PC-9 (cell line): ENCODE measurements at regions of chr2 and their contacts with region 1.

Region 1: GRCh38 chr2:177489719-177490301 is 97.2 kb downstream of the AGPS start:
- DNase-seq: no peak
- H3K4me3 ChIP-seq: no peak overlapping the region
- H3K27ac ChIP-seq: no peak overlapping the region
- H3K4me1 ChIP-seq: no peaks in the 10 kb centered on the region
- H3K27me3 ChIP-seq: no peaks in the 10 kb centered on the region
- CTCF ChIP-seq: peak; percentile 88

Region 2: DNA sequence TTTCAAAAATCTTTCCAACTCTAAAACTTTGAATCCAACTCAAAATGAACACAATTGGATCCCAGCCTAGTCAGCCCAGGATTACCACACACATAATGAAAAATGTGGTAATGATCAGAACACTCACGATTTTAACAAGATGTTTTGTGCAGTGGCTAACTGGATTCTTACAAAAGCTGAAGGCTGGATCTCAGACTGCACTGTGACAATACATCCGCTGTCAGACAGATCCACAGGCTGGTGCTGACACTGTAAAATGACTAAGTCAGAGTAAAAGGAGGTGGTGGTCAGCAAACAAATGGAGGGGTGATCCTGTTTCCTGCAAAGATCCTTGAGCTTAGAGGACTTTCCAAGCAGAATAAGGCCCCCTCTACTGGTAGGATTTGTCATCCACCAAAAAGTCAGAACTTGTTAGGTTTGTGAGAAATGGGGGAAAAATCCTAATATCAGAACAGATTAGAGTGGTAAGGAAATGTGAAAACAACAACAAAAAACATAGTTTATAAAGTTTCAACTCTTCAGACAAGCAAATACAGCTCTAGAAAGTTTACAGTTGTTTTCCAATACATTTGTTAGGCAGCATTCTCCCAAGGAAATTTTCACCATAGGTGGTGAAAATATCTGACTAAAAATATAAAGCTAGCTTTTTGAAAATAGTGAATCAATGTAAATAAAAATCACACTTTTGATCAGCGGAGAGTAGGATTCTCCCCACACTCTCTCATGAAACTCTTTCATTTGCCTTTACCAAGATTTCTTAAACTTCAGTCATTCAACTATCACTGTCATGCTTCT is 114.7 kb after region 1 on chr2:
- CTCF ChIA-PET with region 1: interaction called, 4 read pairs
- POLR2A ChIA-PET with region 1: no interaction called
- intact Hi-C with region 1: loop called (anchors 10 kb)
- DNase-seq: peak in 1 of 2 experiments; percentile 16
- H3K4me3 ChIP-seq: no peak overlapping the region
- H3K27ac ChIP-seq: no peak overlapping the region
- H3K4me1 ChIP-seq: no peaks in the 10 kb centered on the region
- H3K27me3 ChIP-seq: no peaks in the 10 kb centered on the region
- CTCF ChIP-seq: peak; percentile 84

Region 3: GRCh38 chr2:177724398-177725287 is 234.8 kb after region 1 on chr2:
- CTCF ChIA-PET with region 1: no interaction called
- POLR2A ChIA-PET with region 1: no interaction called
- intact Hi-C with region 1: loop called (anchors 1 kb)
- DNase-seq: peak in 1 of 2 experiments; percentile 61
- H3K4me3 ChIP-seq: no peak overlapping the region
- H3K27ac ChIP-seq: no peak overlapping the region
- H3K4me1 ChIP-seq: no peaks in the 10 kb centered on the region
- H3K27me3 ChIP-seq: no peaks in the 10 kb centered on the region
- CTCF ChIP-seq: peak; percentile 99

Region 4: DNA sequence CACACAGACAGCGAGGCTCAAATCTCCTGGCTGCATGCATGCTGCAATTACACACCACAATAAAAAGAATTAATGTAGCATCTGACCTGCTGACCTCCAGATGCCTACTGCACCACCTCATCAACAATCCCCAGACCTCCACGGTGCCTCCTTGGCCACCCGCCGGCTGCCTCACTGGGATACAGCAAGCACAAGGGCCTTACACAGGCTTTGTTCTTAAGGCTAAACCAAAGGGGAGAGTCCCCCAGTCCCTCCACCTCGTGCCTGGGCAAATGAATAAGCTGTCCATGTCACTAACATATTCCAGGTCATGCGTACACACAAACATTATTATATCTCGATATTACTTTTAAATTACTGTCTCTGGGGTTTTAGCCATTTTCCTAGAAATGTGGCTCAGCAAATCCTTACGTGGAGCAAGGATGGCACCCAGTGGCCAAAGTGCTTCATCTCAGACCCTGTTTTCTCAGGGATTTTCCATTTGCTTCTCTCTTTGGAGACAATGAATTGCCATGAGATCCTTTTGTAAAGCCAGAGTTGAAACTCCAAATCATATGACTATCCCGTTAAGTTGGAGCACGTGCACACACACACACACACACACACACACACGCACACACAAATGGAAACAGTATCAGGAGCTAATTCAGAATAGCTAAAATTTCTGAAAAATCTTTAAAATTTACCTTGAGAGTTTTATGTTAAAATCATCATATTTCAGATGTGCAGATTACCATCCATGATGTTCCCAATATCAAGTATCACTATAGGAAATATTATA is 269.0 kb after region 1 on chr2:
- CTCF ChIA-PET with region 1: interaction called, 18 read pairs
- POLR2A ChIA-PET with region 1: no interaction called
- intact Hi-C with region 1: no loop called
- DNase-seq: peak in 1 of 2 experiments; percentile 53
- H3K4me3 ChIP-seq: no peak overlapping the region
- H3K27ac ChIP-seq: no peak overlapping the region
- H3K4me1 ChIP-seq: no peaks in the 10 kb centered on the region
- H3K27me3 ChIP-seq: no peaks in the 10 kb centered on the region
- CTCF ChIP-seq: peak; percentile 76

Region 5: GRCh38 chr2:178072383-178073301 is 582.8 kb after region 1 on chr2 and contains the start of gene PDE11A:
- CTCF ChIA-PET with region 1: no interaction called
- POLR2A ChIA-PET with region 1: interaction called, 10 read pairs
- intact Hi-C with region 1: no loop called
- DNase-seq: peak; percentile 85 to 94
- H3K4me3 ChIP-seq: peak within 1 kb of the TSS; percentile 64
- H3K27ac ChIP-seq: no peak within 1 kb of the TSS
- H3K4me1 ChIP-seq: peaks cover 27% of the 10 kb centered on the region
- H3K27me3 ChIP-seq: no peaks in the 10 kb centered on the region
- CTCF ChIP-seq: no peak
- total RNA-seq, gene PDE11A: 1.1 and 1.4 TPM in 2 replicates